Esophagus squamous epithelium (tissue), 5 donors: ENCODE measurements at regions of chr18 and their contacts with region 1.

Region 1: GRCh38 chr18:68660354-68661183 is 54.3 kb downstream of the TMX3 start:
- DNase-seq: no peak
- H3K4me3 ChIP-seq: no peak overlapping the region
- H3K27ac ChIP-seq: no peak overlapping the region
- H3K4me1 ChIP-seq: no peaks in the 10 kb centered on the region
- H3K27me3 ChIP-seq: peaks cover 0 to 7% (median 0%) of the 10 kb centered on the region in 4 donors
- CTCF ChIP-seq: peak in 5 of 6 experiments; percentile 31 to 53 (median 48)
- POLR2A ChIP-seq: no peak

Region 2: DNA sequence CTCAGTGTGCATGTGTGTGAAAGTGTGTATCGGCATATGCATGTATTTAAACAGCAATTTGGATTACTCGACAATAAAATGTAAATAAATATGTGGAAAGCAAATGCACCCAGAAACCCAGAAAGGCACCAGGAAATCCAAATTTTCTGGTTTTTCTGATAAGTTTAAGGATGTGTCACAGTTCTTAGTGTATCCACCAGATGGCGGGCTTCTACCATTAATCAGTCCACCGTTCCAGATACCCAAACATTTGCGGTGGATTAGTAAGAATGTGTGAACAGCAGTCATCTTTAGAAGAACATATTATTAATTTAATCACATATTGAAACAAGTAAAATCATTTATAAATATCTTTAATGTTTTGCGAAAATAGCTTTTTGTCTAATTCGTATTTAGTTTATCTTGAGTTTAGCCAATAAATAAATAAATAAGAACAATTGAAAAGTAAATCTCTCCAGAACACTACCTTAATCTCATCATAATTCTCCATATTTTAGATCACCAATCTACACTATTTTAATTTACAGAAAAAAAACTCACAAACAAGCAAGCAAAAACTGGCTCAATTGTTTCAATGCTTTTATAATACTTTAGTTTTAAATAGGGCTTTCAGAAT is 1442.9 kb before region 1 on chr18:
- intact Hi-C with region 1: loop called (anchors 10 kb)
- DNase-seq: no peak
- H3K4me3 ChIP-seq: no peak overlapping the region
- H3K27ac ChIP-seq: no peak overlapping the region
- H3K4me1 ChIP-seq: no peaks in the 10 kb centered on the region
- H3K27me3 ChIP-seq: peaks cover 0 to 5% (median 0%) of the 10 kb centered on the region in 4 donors
- CTCF ChIP-seq: peak in 5 of 6 experiments; percentile 73 to 89 (median 79)
- POLR2A ChIP-seq: no peak

Region 3: GRCh38 chr18:68714609-68715496 is 54.3 kb after region 1 on chr18 and contains the start of gene TMX3:
- intact Hi-C with region 1: no loop called
- DNase-seq: peak; percentile 27
- H3K4me3 ChIP-seq: peak within 1 kb of the TSS; percentile 86 to 94 (median 89)
- H3K27ac ChIP-seq: peak within 1 kb of the TSS; percentile 85 to 88 (median 86)
- H3K4me1 ChIP-seq: peaks cover 0 to 31% (median 11%) of the 10 kb centered on the region in 3 donors
- H3K27me3 ChIP-seq: no peaks in the 10 kb centered on the region
- CTCF ChIP-seq: no peak
- POLR2A ChIP-seq: peak in 2 of 4 donors; percentile 27 to 34
- total RNA-seq, gene TMX3: 12.7 to 37.8 (median 25.6) TPM